AG04449 (cell line): ENCODE measurements at regions of chr12 and their contacts with region 1.

Region 1: DNA sequence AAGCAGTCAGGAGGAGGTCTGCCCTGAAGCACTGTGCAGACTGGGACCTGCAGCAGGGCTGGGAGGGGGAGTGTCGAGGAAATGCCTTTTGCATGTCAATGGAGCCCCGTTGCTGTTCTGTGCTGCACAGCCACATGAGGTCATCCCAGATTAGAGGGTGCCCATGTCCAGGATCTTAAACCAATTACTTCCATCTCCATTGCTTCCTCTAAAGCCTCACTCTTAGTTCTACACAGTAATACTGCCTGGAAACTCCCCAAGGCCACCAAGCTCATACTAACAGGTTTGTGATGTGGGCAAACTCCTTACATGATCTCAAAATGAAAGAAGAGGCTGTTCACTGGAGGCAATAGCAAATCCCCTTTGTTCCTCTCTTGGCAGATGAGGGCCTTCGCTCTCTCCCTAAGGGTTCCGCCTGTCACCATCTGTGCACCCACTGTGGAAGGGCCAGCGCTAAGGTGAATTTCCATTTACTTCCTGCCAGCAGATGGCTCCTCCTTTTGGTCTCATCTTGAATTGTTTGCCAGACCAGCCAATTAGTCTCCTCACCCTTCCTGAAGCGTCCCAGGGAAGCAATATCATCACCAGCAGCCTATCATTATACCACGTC is 35.4 kb upstream of the LTA4H start:
- DNase-seq: no peak
- H3K4me3 ChIP-seq: no peak overlapping the region
- CTCF ChIP-seq: no peak

Region 2: GRCh38 chr12:96035278-96036236 is 35.2 kb before region 1 on chr12 and contains the start of gene LTA4H:
- CTCF ChIA-PET with region 1: no interaction called
- POLR2A ChIA-PET with region 1: no interaction called
- DNase-seq: peak; percentile 88
- H3K4me3 ChIP-seq: peak within 1 kb of the TSS; percentile 100
- CTCF ChIP-seq: no peak

Region 3: GRCh38 chr12:96208801-96209549 is 138.2 kb after region 1 on chr12:
- CTCF ChIA-PET with region 1: interaction called, 177 read pairs
- POLR2A ChIA-PET with region 1: no interaction called
- DNase-seq: no peak
- H3K4me3 ChIP-seq: no peak overlapping the region
- CTCF ChIP-seq: no peak